ENCODE measurements at regions of chr2 and their contacts with region 1.

Region 1: DNA sequence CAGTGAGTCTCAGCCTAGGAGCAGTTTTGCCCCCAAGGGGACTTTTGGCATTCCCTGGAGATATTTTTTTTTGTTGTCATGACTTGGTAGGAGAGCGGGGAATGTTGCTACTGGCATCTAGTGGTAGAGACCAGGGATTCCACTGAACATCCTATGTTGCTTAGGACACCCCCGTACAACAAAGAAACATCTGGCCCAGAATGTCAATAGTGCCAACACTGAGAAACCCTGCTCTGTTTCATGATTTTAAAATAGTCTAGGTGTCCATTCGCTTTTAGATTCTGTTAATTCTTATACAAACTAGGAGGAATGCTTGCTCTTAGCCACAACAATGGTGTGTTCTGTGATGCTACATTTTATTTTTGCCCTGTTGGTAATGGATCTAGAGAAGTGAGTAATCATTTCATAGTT is 225.8 kb upstream of the SIX3 start:
- DNase-seq: no peak
- H3K4me3 ChIP-seq: no peak overlapping the region
- H3K27ac ChIP-seq: no peak overlapping the region
- H3K27me3 ChIP-seq: no peaks in the 10 kb centered on the region
- CTCF ChIP-seq: peak in 53 of 56 donors; percentile 18 to 76 (median 48)

Region 2: DNA sequence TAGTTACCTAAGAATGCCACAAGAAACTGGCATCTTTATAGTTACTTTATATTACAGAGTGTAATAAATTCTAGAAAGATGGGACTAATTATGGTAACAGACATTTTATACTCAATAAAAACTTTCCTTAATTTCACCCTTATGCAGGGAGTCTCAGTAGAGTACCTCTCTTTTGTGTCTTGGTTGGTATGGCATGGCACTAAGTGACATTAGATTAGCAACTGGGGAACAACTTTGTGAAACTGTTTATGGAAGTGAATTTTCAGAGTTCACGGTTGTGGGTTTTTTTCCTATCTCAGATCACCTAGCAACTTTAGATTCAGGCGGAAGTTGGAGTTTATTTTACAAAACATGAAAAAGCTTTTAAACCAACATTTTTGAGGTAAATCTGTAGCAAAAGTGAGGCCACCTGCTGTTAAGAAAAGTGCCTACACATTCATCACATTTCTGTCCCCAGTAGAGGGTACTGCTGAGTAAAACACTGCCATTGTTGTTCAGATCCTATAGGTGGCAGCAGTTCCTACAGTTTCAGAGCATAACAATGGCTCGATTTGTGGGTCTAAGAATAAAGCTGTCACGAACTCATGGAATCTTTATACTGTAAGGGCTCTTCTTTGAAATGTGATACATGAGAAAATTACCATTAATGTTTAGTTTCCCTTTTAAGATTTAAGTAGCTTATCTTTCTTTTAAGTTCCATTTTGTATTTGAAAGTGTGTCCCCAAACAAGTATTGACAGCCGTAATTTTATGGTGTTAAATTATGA is 236.4 kb before region 1 on chr2:
- intact Hi-C with region 1: loop called in 1 of 2 experiments (anchors 5 kb)
- DNase-seq: peak in 2 of 10 donors; percentile 30 to 51
- H3K4me3 ChIP-seq: peak overlapping the region in 16 of 59 donors; percentile 2 to 38 (median 19)
- H3K27ac ChIP-seq: no peak overlapping the region
- H3K27me3 ChIP-seq: no peaks in the 10 kb centered on the region
- CTCF ChIP-seq: peak; percentile 91 to 100 (median 100)

Region 3: DNA sequence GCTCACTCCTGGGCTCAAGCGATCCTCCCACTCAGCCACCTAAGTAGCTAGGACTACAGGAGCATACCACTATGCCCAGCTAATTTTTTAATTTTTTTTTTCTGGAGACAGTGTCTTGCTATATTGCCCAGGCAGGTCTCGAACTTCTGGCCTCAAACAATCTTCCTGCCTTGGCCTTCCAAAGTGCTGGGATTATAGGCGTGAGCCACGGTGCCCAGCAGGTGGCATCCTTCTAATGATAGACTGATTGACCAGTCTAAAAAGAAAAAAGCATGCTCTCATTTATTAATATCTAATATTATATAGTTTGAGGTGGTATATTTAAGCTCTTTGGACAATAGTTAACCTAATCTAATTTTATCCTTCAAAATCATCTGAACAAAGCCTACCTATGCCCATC is 155.3 kb before region 1 on chr2:
- intact Hi-C with region 1: loop called in 1 of 2 experiments (anchors 10 kb)
- DNase-seq: no peak
- H3K4me3 ChIP-seq: no peak overlapping the region
- H3K27ac ChIP-seq: no peak overlapping the region
- H3K27me3 ChIP-seq: no peaks in the 10 kb centered on the region
- CTCF ChIP-seq: peak in 2 of 56 donors; percentile 9 to 20